CD4-positive, alpha-beta memory T cell (primary cell): ENCODE measurements at regions of chrX and their contacts with region 1.

Region 1: DNA sequence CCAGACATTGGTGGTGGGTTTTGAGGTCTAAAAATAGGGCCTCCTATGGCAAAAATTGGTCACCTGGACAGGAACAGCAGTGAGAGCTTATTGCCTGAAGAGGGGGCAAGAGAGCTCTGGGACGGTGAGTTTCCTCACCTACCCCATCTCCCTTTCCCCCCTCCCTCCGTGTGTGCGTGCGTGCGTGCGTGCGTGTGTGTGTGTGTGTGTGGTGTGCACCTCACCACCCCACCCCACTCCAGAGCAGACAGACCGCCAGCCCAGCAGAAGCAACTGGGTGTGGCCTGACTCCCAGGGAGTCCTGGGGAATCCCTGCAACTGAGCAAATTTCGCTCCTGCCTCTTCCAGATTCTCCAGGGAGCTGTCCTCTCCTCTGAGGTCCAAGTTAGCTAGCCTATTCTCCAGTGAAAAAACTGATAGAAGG is 44.7 kb downstream of the PRPS1 start:
- DNase-seq: peak; percentile 91 to 92 (median 92)
- H3K4me3 ChIP-seq: peak overlapping the region; percentile 36 to 70
- H3K4me3 Mint-ChIP-seq: peak overlapping the region; percentile 73 to 92 (median 84)
- H3K27ac ChIP-seq: peak overlapping the region; percentile 97
- H3K27ac Mint-ChIP-seq: peak overlapping the region; percentile 96 to 100 (median 99)
- H3K4me1 ChIP-seq: peaks cover 49% of the 10 kb centered on the region
- H3K4me1 Mint-ChIP-seq: peaks cover 26 to 58% (median 50%) of the 10 kb centered on the region in 4 donors
- H3K27me3 ChIP-seq: no peaks in the 10 kb centered on the region
- H3K27me3 Mint-ChIP-seq: no peaks in the 10 kb centered on the region

Region 2: DNA sequence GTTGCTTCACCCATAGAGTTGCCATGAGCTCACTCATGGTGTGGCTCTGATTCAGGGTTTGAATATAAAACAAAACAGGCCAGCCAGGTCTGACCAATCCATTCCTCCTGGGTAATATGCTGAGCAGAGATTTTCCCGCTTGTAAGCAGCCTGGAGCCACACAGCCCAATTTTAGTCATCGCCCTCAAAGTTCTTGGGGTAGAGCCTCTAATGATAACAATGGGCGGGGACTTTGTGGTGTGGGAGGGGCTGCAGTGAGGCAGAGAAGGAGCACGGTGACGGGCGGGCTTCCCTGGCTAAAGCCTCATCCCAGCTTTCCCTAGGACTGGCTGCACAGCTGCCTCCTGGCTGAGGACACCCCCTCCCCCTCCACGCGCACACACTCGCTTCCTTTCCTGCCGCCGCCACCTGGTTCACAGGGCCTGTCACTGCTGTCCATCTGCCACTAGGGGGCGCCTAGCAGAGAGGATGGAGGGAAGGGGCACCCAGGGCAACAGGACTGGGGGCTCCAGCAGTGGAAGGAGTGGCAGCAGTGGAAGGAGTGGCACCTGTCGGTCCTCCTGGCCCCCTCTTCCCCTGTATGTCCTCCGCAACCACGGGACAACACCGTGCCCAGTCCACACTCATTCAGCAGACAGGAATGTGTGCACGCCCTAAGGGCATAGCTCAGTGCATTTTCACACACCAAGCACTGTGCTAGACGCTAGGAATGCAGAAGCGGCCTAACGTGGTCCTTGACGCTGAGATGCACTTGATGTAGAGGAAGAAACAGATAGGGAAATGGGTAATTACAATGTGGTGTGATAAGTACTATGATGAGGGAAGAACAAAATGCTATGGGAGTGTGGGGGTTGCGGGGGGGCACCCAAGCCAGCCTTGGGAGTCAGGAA is 17.9 kb before region 1 on chrX:
- CTCF ChIA-PET with region 1: interaction called, 110 read pairs
- POLR2A ChIA-PET with region 1: interaction called, 33 read pairs
- intact Hi-C with region 1: loop called (anchors 2 kb)
- DNase-seq: peak; percentile 64 to 71 (median 67)
- H3K4me3 ChIP-seq: no peak overlapping the region
- H3K4me3 Mint-ChIP-seq: peak overlapping the region in 2 of 8 donors; percentile 2 to 9
- H3K27ac ChIP-seq: no peak overlapping the region
- H3K27ac Mint-ChIP-seq: peak overlapping the region in 5 of 7 donors; percentile 47 to 82 (median 57)
- H3K4me1 ChIP-seq: peaks cover 12% of the 10 kb centered on the region
- H3K4me1 Mint-ChIP-seq: peaks cover 11 to 15% (median 14%) of the 10 kb centered on the region in 4 donors
- H3K27me3 ChIP-seq: no peaks in the 10 kb centered on the region
- H3K27me3 Mint-ChIP-seq: no peaks in the 10 kb centered on the region

Region 3: GRCh38 chrX:107691024-107691448 is 18.1 kb after region 1 on chrX:
- CTCF ChIA-PET with region 1: interaction called, 4 read pairs
- POLR2A ChIA-PET with region 1: interaction called, 10 read pairs
- intact Hi-C with region 1: no loop called
- DNase-seq: no peak
- H3K4me3 ChIP-seq: no peak overlapping the region
- H3K4me3 Mint-ChIP-seq: no peak overlapping the region
- H3K27ac ChIP-seq: no peak overlapping the region
- H3K27ac Mint-ChIP-seq: peak overlapping the region in 2 of 7 donors; percentile 1 to 26
- H3K4me1 ChIP-seq: peaks cover 16% of the 10 kb centered on the region
- H3K4me1 Mint-ChIP-seq: peaks cover 8 to 20% (median 15%) of the 10 kb centered on the region in 4 donors
- H3K27me3 ChIP-seq: no peaks in the 10 kb centered on the region
- H3K27me3 Mint-ChIP-seq: no peaks in the 10 kb centered on the region

Region 4: DNA sequence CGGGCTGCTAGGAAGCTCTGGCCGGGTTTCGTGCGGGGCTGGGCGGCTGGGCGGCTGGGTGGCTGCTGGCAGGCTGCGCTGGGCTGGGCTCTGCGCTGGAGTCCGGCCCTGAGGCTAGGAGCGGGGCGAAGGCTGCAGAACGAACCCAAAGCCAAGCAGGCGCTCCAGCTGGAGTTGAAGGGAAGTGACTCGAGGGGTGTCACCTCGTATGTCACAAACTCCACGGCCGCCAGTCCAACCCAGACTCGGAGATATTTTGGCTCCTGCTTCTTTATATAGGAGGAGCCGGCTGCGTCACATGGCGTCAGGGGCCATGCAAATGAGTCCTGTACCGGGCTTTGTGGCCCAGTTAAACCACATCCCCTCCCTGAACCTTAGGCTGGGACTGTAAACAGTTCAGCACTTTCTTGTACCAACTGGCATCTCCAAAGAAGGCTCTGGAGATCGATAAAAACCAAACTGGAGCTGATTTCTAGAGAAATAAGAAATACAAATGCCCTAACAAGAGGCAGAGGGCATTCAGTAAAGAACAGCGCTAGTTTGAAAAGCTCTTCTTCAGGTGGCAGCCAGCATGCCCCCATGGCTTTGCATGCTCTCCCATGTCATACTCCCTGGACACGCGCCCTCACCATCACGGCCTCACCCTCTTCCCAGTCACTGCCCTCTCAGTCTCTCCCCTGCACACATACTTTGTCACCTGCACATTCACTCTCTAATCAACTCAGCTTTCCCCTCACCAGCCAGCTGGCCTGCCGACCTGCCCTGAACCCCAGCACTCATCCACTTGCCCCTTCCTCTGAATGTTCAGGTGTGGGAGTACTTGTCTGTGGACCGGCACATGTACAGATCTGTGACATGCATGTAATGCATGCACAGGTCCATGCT is 44.1 kb after region 1 on chrX:
- CTCF ChIA-PET with region 1: interaction called, 462 read pairs
- POLR2A ChIA-PET with region 1: interaction called, 1,740 read pairs
- intact Hi-C with region 1: loop called (anchors 1 kb)
- DNase-seq: peak; percentile 92 to 95 (median 95)
- H3K4me3 ChIP-seq: peak overlapping the region; percentile 61 to 92
- H3K4me3 Mint-ChIP-seq: peak overlapping the region; percentile 88 to 97 (median 96)
- H3K27ac ChIP-seq: peak overlapping the region; percentile 95
- H3K27ac Mint-ChIP-seq: peak overlapping the region; percentile 99 to 100 (median 100)
- H3K4me1 ChIP-seq: peaks cover 49% of the 10 kb centered on the region
- H3K4me1 Mint-ChIP-seq: peaks cover 25 to 61% (median 48%) of the 10 kb centered on the region in 4 donors
- H3K27me3 ChIP-seq: no peaks in the 10 kb centered on the region
- H3K27me3 Mint-ChIP-seq: no peaks in the 10 kb centered on the region

Region 5: GRCh38 chrX:107753187-107753586 is 80.2 kb after region 1 on chrX:
- CTCF ChIA-PET with region 1: interaction called, 10 read pairs
- POLR2A ChIA-PET with region 1: no interaction called
- intact Hi-C with region 1: no loop called
- DNase-seq: no peak
- H3K4me3 ChIP-seq: no peak overlapping the region
- H3K4me3 Mint-ChIP-seq: no peak overlapping the region
- H3K27ac ChIP-seq: no peak overlapping the region
- H3K27ac Mint-ChIP-seq: peak overlapping the region in 2 of 7 donors; percentile 15 to 24
- H3K4me1 ChIP-seq: no peaks in the 10 kb centered on the region
- H3K4me1 Mint-ChIP-seq: peaks cover 5 to 17% (median 9%) of the 10 kb centered on the region in 4 donors
- H3K27me3 ChIP-seq: no peaks in the 10 kb centered on the region
- H3K27me3 Mint-ChIP-seq: no peaks in the 10 kb centered on the region

Region 6: GRCh38 chrX:108070891-108071290 is 397.9 kb after region 1 on chrX:
- CTCF ChIA-PET with region 1: no interaction called
- POLR2A ChIA-PET with region 1: no interaction called
- intact Hi-C with region 1: loop called (anchors 5 kb)
- DNase-seq: no peak
- H3K4me3 ChIP-seq: no peak overlapping the region
- H3K4me3 Mint-ChIP-seq: no peak overlapping the region
- H3K27ac ChIP-seq: no peak overlapping the region
- H3K27ac Mint-ChIP-seq: peak overlapping the region in 4 of 7 donors; percentile 29 to 57 (median 32)
- H3K4me1 ChIP-seq: no peaks in the 10 kb centered on the region
- H3K4me1 Mint-ChIP-seq: peaks cover 0 to 4% (median 2%) of the 10 kb centered on the region in 4 donors
- H3K27me3 ChIP-seq: no peaks in the 10 kb centered on the region
- H3K27me3 Mint-ChIP-seq: no peaks in the 10 kb centered on the region